Right lobe of liver (tissue), 6 donors: ENCODE measurements at regions of chr3 and their contacts with region 1.

Region 1: GRCh38 chr3:45499529-45499928 is 95.0 kb upstream of the LIMD1 start:
- DNase-seq: no peak
- ATAC-seq: peak; percentile 29 to 66 (median 50)
- H3K4me3 ChIP-seq: no peak overlapping the region
- H3K27ac ChIP-seq: no peak overlapping the region
- H3K4me1 ChIP-seq: peaks cover 0 to 13% (median 0%) of the 10 kb centered on the region in 4 donors
- H3K27me3 ChIP-seq: no peaks in the 10 kb centered on the region
- CTCF ChIP-seq: peak; percentile 44 to 63 (median 55)
- POLR2A ChIP-seq: no peak

Region 2: DNA sequence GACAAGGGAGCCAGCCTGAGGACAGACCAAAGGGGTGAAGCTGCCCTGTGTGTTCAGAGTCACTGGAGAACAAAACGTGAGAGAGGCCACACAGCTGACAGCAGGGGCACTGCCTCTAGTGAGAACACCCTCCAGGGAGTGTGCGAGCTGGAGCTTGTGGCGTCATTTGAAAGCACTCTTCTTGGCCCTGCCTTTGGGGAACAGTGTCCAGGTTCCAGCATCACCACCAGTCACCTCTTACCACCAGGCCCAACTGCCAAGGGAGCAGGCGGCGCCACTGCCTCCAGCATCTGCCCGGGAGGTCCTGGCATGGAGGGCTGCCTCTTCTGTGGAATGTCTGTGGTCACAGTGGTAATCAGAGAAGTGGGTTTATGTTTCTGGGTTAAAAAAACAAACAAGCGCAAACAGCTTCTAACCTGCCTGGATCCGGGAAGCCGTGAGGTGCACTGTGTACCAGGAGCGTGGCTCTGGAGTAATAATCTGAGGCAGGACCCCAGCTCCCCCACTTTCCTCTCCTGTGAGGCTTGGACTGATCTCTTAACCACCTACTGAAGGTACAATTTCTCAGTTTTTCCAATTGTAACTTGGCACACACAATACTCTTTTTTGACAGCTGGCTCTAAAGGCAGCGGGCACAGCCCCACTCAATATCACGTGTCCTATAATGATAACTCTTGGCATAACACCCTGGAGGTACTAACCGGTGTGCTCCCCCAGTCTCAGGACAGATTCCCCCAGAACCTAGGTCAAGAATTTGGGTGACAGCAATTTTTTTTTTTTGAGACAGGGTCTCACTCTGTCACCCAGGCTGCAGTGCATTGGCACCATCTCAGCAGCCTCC is 321.1 kb before region 1 on chr3:
- intact Hi-C with region 1: no loop called
- DNase-seq: no peak
- ATAC-seq: peak in 1 of 4 donors; percentile 19
- H3K4me3 ChIP-seq: no peak overlapping the region
- H3K27ac ChIP-seq: no peak overlapping the region
- H3K4me1 ChIP-seq: no peaks in the 10 kb centered on the region
- H3K27me3 ChIP-seq: no peaks in the 10 kb centered on the region
- CTCF ChIP-seq: no peak
- POLR2A ChIP-seq: no peak

Region 3: GRCh38 chr3:45224824-45225464 is 274.6 kb before region 1 on chr3:
- intact Hi-C with region 1: loop called (anchors 10 kb)
- DNase-seq: peak; percentile 84 to 88 (median 87)
- ATAC-seq: peak; percentile 88 to 90 (median 90)
- H3K4me3 ChIP-seq: peak overlapping the region; percentile 15 to 54 (median 38)
- H3K27ac ChIP-seq: no peak overlapping the region
- H3K4me1 ChIP-seq: peaks cover 0 to 5% (median 0%) of the 10 kb centered on the region in 4 donors
- H3K27me3 ChIP-seq: peaks cover 0 to 8% of the 10 kb centered on the region in 2 donors
- CTCF ChIP-seq: peak; percentile 53 to 70 (median 62)
- POLR2A ChIP-seq: no peak